Dorsolateral prefrontal cortex (tissue), 120 donors: ENCODE measurements at regions of chr12 and their contacts with region 1.

Region 1: DNA sequence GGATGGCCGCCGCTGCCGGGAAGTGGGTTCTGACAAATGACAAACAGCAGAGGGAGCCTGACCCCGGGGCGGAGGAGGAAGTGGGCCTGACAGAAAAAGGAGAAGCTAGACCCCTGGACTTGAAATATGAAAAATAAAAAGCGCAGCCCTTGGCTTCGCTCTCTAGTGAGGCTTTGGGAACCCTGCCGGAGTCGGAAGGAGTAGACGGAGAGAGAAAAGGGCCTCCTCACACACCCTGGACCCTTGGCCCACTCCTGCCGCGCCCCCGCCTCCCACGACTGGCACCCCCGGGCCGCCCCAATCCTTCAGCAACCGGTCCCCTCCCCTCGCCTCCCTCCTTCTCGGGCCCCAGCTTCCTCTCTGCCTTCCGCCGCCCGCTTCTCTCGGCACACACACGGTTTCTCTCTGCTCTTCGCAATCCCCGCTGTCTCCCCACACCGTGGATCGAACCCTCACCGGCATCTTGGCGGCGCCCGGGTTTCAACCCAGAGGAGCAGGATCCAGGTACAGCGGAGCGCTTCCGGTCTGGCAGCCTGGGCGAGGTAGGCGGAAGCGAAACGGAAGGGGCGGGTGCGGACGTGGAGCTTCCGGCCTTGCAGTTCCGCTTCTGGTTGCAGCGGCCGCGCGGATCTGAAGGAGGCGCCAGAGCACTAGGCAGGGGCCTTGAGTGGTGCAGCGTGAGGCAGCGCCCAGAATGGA is at the start of gene ARPC3:
- DNase-seq: peak; percentile 89 to 95 (median 94)
- H3K4me3 ChIP-seq: peak within 1 kb of the TSS; percentile 60 to 97 (median 86)
- H3K27ac ChIP-seq: peak within 1 kb of the TSS; percentile 36 to 96 (median 89)
- H3K27me3 ChIP-seq: no peaks in the 10 kb centered on the region
- CTCF ChIP-seq: peak; percentile 67 to 96 (median 87)
- total RNA-seq, gene ARPC3: 78.9 to 178 (median 137) TPM

Region 2: GRCh38 chr12:109844983-109845823 is 604.7 kb before region 1 on chr12:
- intact Hi-C with region 1: no loop called
- DNase-seq: peak; percentile 65 to 90 (median 85)
- H3K4me3 ChIP-seq: peak overlapping the region in 56 of 59 donors; percentile 16 to 62 (median 40)
- H3K27ac ChIP-seq: peak overlapping the region in 27 of 59 donors; percentile 10 to 76 (median 60)
- H3K27me3 ChIP-seq: no peaks in the 10 kb centered on the region
- CTCF ChIP-seq: peak; percentile 88 to 100 (median 98)

Region 3: GRCh38 chr12:110549716-110550115 is 99.8 kb after region 1 on chr12:
- intact Hi-C with region 1: loop called in 1 of 2 experiments (anchors 5 kb)
- DNase-seq: no peak
- H3K4me3 ChIP-seq: no peak overlapping the region
- H3K27ac ChIP-seq: peak overlapping the region in 4 of 59 donors; percentile 2 to 38 (median 27)
- H3K27me3 ChIP-seq: no peaks in the 10 kb centered on the region
- CTCF ChIP-seq: no peak